Right lobe of liver (tissue), 6 donors: ENCODE measurements at regions of chr16 and their contacts with region 1.

Region 1: DNA sequence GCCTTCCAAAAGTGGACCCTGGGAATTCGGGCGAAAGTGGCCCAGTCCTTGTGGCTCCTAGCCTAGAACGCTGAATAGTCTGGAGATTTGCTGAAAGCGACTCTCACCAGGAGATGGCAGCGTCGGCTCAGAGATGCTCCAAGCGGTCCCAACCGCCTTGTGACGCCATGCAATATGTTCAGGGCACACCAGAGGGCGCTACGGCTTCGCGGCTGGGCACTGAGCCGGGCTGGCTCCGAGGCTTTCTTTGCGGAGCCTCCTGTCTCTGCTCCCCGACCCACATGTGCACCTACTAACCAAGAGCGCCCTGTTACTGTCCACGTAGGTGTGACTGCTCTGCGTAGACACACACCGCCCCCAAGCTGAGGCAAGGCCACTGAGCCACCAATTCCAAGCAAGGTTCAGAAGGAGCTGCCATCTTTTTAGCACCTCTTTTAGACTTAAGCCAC is 36.9 kb downstream of the SYCE1L start:
- DNase-seq: peak; percentile 87 to 90 (median 88)
- ATAC-seq: peak; percentile 100
- H3K4me3 ChIP-seq: no peak overlapping the region
- H3K27ac ChIP-seq: no peak overlapping the region
- H3K4me1 ChIP-seq: no peaks in the 10 kb centered on the region
- H3K27me3 ChIP-seq: no peaks in the 10 kb centered on the region
- CTCF ChIP-seq: peak; percentile 99 to 100 (median 100)
- POLR2A ChIP-seq: no peak

Region 2: GRCh38 chr16:77584205-77584859 is 348.2 kb after region 1 on chr16:
- intact Hi-C with region 1: loop called (anchors 5 kb)
- DNase-seq: no peak
- ATAC-seq: peak; percentile 69 to 82 (median 72)
- H3K4me3 ChIP-seq: no peak overlapping the region
- H3K27ac ChIP-seq: no peak overlapping the region
- H3K4me1 ChIP-seq: peaks cover 0 to 5% (median 0%) of the 10 kb centered on the region in 4 donors
- H3K27me3 ChIP-seq: no peaks in the 10 kb centered on the region
- CTCF ChIP-seq: peak; percentile 87 to 93 (median 90)
- POLR2A ChIP-seq: no peak